H1 (cell line): ENCODE measurements at regions of chr4 and their contacts with region 1.

Region 1: GRCh38 chr4:159206427-159206871 is 103.6 kb downstream of the RAPGEF2 start:
- DNase-seq: no peak
- H3K4me3 ChIP-seq: no peak overlapping the region
- H3K27ac ChIP-seq: no peak overlapping the region
- H3K4me1 ChIP-seq: peaks cover 0 to 5% (median under 1%) of the 10 kb centered on the region in 4 experiments; a peak in 3 of 7 replicates
- H3K27me3 ChIP-seq: peaks cover 0 to 1% (median 0%) of the 10 kb centered on the region in 4 experiments; a peak in 1 of 7 replicates
- CTCF ChIP-seq: no peak
- EP300 ChIP-seq: no peak
- POLR2A ChIP-seq: no peak
- RAD21 ChIP-seq: no peak

Region 2: DNA sequence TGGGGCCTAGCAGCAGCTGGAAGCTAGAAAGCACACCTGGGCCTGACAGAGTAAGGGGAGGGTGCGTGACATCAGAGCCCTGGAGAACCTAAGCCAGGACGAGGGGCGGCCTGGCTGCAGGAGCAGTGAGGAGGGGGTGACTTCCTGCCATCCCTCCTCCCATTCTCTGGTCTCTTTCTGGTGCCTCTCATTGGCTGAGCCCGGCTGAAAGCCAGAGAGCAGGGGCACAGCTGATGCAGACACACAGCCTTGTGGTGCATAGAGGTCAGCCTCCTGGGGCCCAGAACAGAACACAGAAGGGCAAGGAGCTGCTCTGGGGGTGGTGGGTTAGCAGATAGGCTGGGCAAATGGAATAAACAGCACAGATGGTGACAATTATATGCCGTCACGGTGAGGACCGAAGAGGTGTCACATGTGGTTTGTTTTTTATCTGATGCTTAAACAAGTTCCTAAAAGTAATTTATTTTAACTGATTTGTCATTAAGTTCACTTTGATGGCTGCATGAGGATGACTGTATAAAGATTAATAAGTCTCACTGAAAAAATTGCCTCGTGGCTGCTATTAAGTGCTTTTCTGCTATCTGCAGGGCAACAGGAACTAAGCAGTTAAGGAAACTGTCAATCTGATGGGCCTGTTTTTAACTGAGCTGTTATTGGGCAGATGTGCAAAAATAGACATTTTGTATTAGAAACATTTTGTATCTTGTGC is 335.7 kb before region 1 on chr4:
- CTCF ChIA-PET with region 1: interaction called, 10 read pairs
- POLR2A ChIA-PET with region 1: no interaction called
- DNase-seq: peak; percentile 5 to 58
- H3K4me3 ChIP-seq: no peak overlapping the region
- H3K27ac ChIP-seq: no peak overlapping the region
- H3K4me1 ChIP-seq: peaks cover 0 to 10% (median 6%) of the 10 kb centered on the region in 4 experiments; a peak in 5 of 7 replicates
- H3K27me3 ChIP-seq: no peaks in the 10 kb centered on the region
- CTCF ChIP-seq: no peak
- EP300 ChIP-seq: no peak; a peak in 1 of 3 replicates
- POLR2A ChIP-seq: no peak
- RAD21 ChIP-seq: no peak

Region 3: GRCh38 chr4:158914218-158914617 is 292.2 kb before region 1 on chr4:
- CTCF ChIA-PET with region 1: interaction called, 12 read pairs
- POLR2A ChIA-PET with region 1: no interaction called
- DNase-seq: no peak
- H3K4me3 ChIP-seq: no peak overlapping the region
- H3K27ac ChIP-seq: no peak overlapping the region
- H3K4me1 ChIP-seq: peaks cover 0 to 5% (median 1%) of the 10 kb centered on the region in 4 experiments; a peak in 1 of 7 replicates
- H3K27me3 ChIP-seq: peaks cover 0 to 1% (median 0%) of the 10 kb centered on the region in 4 experiments; a peak in 1 of 7 replicates
- CTCF ChIP-seq: no peak
- EP300 ChIP-seq: no peak
- POLR2A ChIP-seq: no peak
- RAD21 ChIP-seq: no peak